ENCODE measurements at regions of chr16 and their contacts with region 1.

Region 1: GRCh38 chr16:48250520-48251278 is 3.4 kb upstream of the ABCC11 start:
- DNase-seq: no peak
- ATAC-seq: peak in 1 of 4 donors; percentile 39
- H3K4me3 ChIP-seq: no peak overlapping the region
- H3K27ac ChIP-seq: no peak overlapping the region
- H3K4me1 ChIP-seq: peaks cover 31% of the 10 kb centered on the region
- H3K27me3 ChIP-seq: no peaks in the 10 kb centered on the region
- CTCF ChIP-seq: no peak

Region 2: DNA sequence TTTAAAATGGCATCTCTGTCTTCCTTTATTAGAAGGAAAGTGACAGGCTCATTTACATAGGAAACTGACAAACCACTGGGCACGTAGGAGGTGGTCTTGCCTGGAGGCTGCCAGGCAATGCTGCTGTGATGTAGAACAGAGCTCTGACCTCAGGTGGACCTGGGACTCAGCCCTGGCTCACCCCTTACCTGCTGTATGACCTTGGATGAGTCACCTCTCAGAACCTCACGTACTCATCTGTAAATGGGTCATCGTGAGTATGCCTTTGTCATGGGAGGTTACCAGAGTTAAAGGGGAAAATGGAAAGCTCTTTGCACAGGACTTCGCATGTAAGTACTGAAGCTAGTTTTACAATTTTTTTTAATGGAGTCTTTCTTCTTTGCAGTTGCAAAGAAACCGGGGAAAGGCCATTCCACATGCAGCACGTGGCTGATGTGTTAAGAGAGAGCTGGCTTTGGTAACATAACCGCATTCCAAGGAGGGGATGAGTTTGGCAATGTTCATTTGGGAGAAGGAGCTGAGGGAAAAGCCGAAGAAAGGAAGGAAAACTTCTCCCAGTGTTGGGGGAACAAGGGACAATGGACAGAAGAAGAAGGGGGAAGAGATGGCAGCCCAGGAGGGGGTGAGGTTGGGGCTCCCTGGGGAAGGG is 44.0 kb before region 1 on chr16:
- intact Hi-C with region 1: no loop called
- DNase-seq: no peak
- ATAC-seq: no peak
- H3K4me3 ChIP-seq: no peak overlapping the region
- H3K27ac ChIP-seq: no peak overlapping the region
- H3K4me1 ChIP-seq: no peaks in the 10 kb centered on the region
- H3K27me3 ChIP-seq: no peaks in the 10 kb centered on the region
- CTCF ChIP-seq: no peak

Region 3: DNA sequence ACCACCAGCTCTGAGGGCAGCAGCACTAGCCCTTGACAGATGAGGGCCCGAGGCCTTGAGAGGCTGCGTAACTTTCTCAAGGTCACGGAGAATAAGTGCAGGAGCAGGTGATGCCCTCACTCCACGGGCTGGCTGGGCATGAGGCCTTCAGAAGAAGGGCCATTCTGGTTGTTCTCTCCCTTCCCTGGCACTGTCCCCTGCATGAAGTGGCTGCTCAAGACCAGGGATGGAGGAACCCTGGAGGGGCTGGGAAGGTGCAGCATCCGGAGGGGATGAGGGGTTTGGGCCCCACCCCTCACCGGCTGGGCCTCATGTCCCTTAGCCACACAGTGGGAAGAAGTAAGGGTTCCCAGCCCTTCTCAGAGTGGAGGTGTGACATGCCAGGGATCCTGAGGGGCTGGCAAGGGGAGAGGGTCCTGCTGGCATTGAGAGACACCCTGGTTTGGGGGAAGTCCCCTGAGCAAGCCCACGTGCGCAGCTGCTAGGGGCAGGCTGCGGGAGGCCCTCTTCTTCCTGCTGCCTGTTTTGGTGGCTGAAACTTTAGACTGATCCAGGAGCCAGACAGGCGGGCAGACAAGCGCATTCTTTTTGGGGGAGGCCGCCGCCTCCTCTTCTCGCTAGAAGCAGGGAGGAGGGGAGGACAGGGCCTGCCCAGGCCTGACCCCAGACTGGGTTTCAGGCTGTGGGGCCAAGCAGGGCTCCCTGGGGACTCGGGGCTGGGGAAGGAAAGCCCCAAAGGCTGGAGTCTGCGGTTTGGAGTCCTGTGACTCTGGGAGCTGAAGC is 285.3 kb after region 1 on chr16:
- intact Hi-C with region 1: loop called in 1 of 2 experiments (anchors 10 kb)
- DNase-seq: peak; percentile 84 to 85
- ATAC-seq: peak; percentile 57 to 90 (median 73)
- H3K4me3 ChIP-seq: no peak overlapping the region
- H3K27ac ChIP-seq: peak overlapping the region; percentile 87
- H3K4me1 ChIP-seq: peaks cover 52% of the 10 kb centered on the region
- H3K27me3 ChIP-seq: no peaks in the 10 kb centered on the region
- CTCF ChIP-seq: no peak